ENCODE measurements at regions of chr5 and their contacts with region 1.

Region 1: DNA sequence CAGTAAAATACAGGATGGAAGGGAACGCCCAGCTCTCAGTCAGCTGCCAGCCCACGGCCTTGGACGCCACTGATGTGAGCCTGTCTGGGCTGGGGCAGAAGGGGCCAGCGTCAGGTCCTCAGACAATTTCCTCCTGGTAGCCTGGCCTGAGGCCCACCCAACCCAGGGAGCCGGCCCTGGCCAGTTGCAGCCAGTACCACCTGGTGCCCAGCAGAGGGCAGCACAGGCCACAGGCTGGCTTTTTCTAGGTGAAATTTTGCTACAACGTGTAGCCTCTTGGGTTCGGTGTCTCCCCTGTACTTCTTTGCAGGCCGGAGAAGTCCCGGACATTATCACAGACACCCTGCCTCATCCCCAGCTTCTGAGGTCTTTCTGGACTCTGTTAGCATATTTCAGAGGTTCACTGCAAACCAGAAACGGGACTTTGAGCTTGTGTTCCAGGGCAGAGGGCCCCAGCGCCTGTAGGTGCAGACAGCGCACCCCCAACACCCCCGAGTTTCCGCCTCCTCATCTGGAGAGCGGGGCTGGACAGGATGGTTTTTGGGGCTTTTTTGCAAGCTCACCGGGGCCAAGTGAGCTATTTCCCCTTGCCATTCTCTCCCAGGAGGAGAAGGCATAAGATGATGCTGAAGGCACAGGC is 45.9 kb upstream of the KCNMB1 start:
- DNase-seq: peak; percentile 19
- H3K4me3 ChIP-seq: no peak overlapping the region
- H3K27ac ChIP-seq: no peak overlapping the region
- H3K4me1 ChIP-seq: no peaks in the 10 kb centered on the region
- H3K27me3 ChIP-seq: peaks cover 6% of the 10 kb centered on the region
- CTCF ChIP-seq: peak; percentile 91 to 99

Region 2: DNA sequence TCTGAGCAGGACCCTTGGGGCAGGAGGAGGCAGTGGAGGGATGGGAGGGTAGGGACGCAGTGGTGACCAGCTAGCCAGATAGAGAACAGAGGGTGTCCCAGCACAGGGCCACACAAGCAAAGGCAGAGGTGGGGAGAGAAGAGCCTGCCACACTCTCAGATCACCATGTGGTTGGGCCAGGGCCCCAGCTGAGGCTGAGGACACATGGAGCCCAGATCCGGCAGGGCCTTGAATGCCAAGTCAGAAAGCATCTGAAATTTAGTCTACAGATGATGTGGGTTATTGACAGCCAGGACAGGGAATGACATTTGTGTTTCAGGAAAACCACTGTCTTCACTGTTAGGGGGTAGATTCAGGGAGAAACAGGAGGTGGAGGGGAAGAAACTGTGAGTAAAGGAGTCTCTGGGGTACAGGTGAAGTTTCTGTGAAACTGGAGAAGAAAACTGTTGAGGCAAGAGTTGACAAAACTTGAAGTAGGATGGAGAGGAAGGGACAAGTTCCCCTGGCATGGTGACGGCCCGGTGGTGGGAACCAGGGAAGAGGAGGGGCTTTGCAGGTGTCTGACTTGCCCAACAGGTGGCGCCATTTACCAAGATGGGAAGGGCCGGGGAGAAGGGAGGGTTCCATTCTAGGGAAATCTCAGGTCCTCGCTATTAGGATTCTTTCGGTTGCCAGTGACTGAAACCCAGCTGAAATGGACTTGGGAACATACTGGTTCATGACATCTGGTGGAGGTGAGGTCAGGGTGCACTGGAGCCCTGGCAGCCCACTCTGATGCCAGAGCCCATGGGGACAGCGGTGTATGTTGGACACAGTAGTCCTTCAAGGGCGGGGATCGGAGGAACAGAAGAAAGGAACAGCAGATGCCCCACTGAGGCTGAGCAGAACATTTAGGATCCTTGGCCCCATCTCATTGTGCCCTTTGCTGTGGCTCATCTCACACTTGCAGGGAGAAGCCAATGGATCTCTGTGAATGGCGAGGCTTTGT is 168.8 kb after region 1 on chr5:
- CTCF ChIA-PET with region 1: no interaction called
- dilution Hi-C with region 1: loop called (anchors 25 kb)
- in situ Hi-C with region 1: no loop called
- intact Hi-C with region 1: no loop called
- DNase-seq: peak; percentile 24
- H3K4me3 ChIP-seq: no peak overlapping the region
- H3K27ac ChIP-seq: no peak overlapping the region
- H3K4me1 ChIP-seq: no peaks in the 10 kb centered on the region
- H3K27me3 ChIP-seq: peaks cover 2% of the 10 kb centered on the region
- CTCF ChIP-seq: peak; percentile 59 to 78

Region 3: GRCh38 chr5:170633235-170634081 is 198.4 kb after region 1 on chr5:
- CTCF ChIA-PET with region 1: no interaction called
- dilution Hi-C with region 1: no loop called
- in situ Hi-C with region 1: no loop called
- intact Hi-C with region 1: loop called (anchors 1 kb)
- DNase-seq: peak; percentile 27
- H3K4me3 ChIP-seq: peak overlapping the region in 1 of 3 experiments; percentile 39
- H3K27ac ChIP-seq: no peak overlapping the region
- H3K4me1 ChIP-seq: peaks cover 15% of the 10 kb centered on the region
- H3K27me3 ChIP-seq: no peaks in the 10 kb centered on the region
- CTCF ChIP-seq: no peak

Measured in mammary epithelial cell (primary cell).